SK-N-SH (cell line): ENCODE measurements at regions of chr5 and their contacts with region 1.

Region 1: DNA sequence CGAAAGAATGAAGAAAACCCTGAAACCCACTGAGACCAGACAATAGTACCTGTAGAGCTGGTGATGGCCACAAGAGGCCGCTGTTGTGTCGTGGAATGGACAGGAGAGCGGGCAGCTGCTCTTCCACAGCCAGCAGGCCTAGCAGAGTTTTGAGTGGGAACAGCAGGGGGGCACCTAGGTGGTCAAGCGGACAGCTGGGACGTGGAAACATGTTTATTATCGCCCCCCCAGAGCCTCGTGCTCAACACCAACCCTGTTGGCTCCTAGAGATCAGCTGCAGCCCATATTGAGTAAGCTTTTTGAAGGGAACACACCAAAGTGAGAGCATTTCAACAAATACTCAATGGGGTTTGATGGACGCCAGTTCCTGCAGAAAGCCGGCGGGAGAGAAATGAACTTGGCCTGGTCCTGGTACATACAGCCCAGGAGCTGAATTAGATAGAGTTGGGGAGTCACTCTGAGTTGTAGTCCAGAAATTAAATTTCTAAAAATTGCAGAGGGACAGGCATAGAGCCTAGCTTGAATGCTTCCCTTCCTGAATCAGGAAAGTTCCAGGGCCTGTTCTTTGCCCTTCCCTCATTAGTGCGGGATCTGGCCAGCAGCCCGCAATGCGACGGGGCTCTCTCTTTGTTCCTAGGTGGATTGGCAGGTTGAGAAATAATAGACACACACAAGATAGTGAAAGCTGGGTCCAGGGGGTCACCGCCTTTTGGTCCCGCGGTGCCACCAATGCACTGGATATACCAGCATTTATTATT is 33.8 kb downstream of the MFAP3 start:
- DNase-seq: peak; percentile 73
- H3K4me3 ChIP-seq: peak overlapping the region in 1 of 2 experiments; percentile 53; a peak in 2 of 4 replicates
- H3K27ac ChIP-seq: no peak overlapping the region
- H3K4me1 ChIP-seq: peaks cover 0 to 5% of the 10 kb centered on the region in 2 experiments; a peak in 2 of 4 replicates
- H3K27me3 ChIP-seq: no peaks in the 10 kb centered on the region
- CTCF ChIP-seq: peak; percentile 95
- EP300 ChIP-seq: no peak
- RAD21 ChIP-seq: peak; percentile 98

Region 2: GRCh38 chr5:154038707-154039457 is 33.7 kb before region 1 on chr5 and contains the starts of genes FAM114A2 and MFAP3:
- CTCF ChIA-PET with region 1: interaction called, 10 read pairs
- POLR2A ChIA-PET with region 1: no interaction called
- DNase-seq: peak; percentile 89
- H3K4me3 ChIP-seq: peak within 1 kb of the TSS; percentile 97 to 99
- H3K27ac ChIP-seq: peak within 1 kb of the TSS; percentile 73 to 91; a peak in 3 of 4 replicates
- H3K4me1 ChIP-seq: peaks cover 0 to 8% of the 10 kb centered on the region in 2 experiments; a peak in 2 of 4 replicates
- H3K27me3 ChIP-seq: no peaks in the 10 kb centered on the region
- CTCF ChIP-seq: no peak
- EP300 ChIP-seq: no peak; a peak in 1 of 4 replicates
- RAD21 ChIP-seq: no peak
- polyA plus RNA-seq, gene FAM114A2: 9.0 and 11.9 TPM in 2 replicates
- polyA plus RNA-seq, gene MFAP3: 16.0 and 23.3 TPM in 2 replicates

Region 3: GRCh38 chr5:154087257-154087656 is 14.7 kb after region 1 on chr5:
- CTCF ChIA-PET with region 1: interaction called, 24 read pairs
- POLR2A ChIA-PET with region 1: no interaction called
- DNase-seq: no peak
- H3K4me3 ChIP-seq: no peak overlapping the region
- H3K27ac ChIP-seq: no peak overlapping the region
- H3K4me1 ChIP-seq: peaks cover 0 to 18% of the 10 kb centered on the region in 2 experiments; a peak in 2 of 4 replicates
- H3K27me3 ChIP-seq: no peaks in the 10 kb centered on the region
- CTCF ChIP-seq: no peak
- EP300 ChIP-seq: no peak
- RAD21 ChIP-seq: no peak

Region 4: GRCh38 chr5:154189819-154190594 is 117.4 kb after region 1 on chr5:
- CTCF ChIA-PET with region 1: interaction called, 184 read pairs
- POLR2A ChIA-PET with region 1: no interaction called
- DNase-seq: peak; percentile 97
- H3K4me3 ChIP-seq: peak overlapping the region; percentile 88 to 96
- H3K27ac ChIP-seq: peak overlapping the region; percentile 38 to 55; a peak in 3 of 4 replicates
- H3K4me1 ChIP-seq: peaks cover 17 to 31% of the 10 kb centered on the region in 2 experiments; a peak in 3 of 4 replicates
- H3K27me3 ChIP-seq: no peaks in the 10 kb centered on the region
- CTCF ChIP-seq: peak; percentile 60
- EP300 ChIP-seq: no peak
- RAD21 ChIP-seq: no peak

Region 5: DNA sequence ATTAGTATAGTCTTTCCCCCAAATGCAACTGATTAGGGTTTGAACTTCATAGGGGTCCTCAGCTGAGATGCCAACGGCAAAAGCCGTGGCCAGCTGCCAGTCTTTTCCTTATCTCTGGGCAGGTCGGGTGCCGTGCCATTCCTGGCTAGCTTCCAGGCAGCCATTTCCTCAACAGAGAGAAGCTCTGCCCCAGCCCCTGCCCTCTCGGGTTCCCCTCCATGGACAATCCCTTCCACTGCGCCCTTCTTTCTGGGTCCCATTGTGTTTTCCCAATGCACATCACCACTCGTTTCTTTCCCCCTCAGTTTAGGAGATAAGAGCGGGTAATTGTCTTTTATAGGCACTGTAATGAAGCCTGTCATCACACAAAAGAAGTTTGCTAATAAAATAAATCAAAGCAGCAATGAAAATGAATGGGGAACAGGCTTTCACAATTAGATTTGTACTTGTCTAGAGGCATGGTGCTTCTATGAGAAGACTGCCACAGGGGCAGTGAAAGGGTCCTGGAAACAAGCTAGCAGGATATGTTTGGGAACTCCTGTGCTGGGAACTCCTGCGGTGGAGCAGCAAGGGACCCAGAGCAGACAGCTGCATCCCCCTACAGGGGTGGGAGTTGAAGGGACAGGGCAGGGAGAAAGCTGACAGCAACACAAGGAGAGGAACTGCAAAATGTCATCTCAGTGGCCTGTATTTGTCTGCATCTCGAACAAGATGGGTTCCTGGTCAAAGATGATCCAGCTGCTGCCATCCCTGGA is 325.2 kb after region 1 on chr5:
- CTCF ChIA-PET with region 1: interaction called, 105 read pairs
- POLR2A ChIA-PET with region 1: no interaction called
- DNase-seq: peak; percentile 79
- H3K4me3 ChIP-seq: no peak overlapping the region
- H3K27ac ChIP-seq: no peak overlapping the region
- H3K4me1 ChIP-seq: peaks cover 0 to 23% of the 10 kb centered on the region in 2 experiments; a peak in 2 of 4 replicates
- H3K27me3 ChIP-seq: no peaks in the 10 kb centered on the region
- CTCF ChIP-seq: no peak
- EP300 ChIP-seq: peak in 1 of 2 experiments; percentile 80; a peak in 2 of 4 replicates
- RAD21 ChIP-seq: no peak